MCF 10A (cell line): ENCODE measurements at regions of chr3 and their contacts with region 1.

Region 1: GRCh38 chr3:126134219-126134975 is 46.0 kb downstream of the ALDH1L1 start:
- DNase-seq: peak; percentile 63
- H3K4me3 Mint-ChIP-seq: no peak overlapping the region
- H3K27ac Mint-ChIP-seq: no peak overlapping the region
- H3K4me1 Mint-ChIP-seq: peaks cover 7% of the 10 kb centered on the region
- H3K27me3 Mint-ChIP-seq: peaks cover 20% of the 10 kb centered on the region
- CTCF ChIP-seq: peak; percentile 92

Region 2: DNA sequence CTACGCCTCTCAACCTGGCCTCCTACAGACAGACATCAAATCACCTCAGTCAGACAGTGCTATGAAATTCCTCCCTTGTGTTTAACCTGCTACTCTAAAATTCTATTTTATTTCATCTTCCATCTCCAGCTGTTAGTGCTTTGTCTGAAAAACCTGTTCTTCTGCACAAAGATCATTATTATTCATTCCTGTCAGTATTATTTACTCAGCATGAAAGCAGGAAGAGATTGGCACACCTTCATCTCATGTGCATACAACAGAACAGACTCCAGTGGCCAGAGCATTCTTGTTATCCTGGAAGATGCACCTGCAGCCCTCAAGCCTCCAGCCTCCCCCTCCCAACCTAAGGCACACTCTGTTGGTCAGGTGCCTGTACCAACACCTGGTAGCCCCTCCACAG is 167.3 kb before region 1 on chr3:
- CTCF ChIA-PET with region 1: interaction called, 14 read pairs
- POLR2A ChIA-PET with region 1: no interaction called
- intact Hi-C with region 1: no loop called
- DNase-seq: no peak
- H3K4me3 Mint-ChIP-seq: no peak overlapping the region
- H3K27ac Mint-ChIP-seq: no peak overlapping the region
- H3K4me1 Mint-ChIP-seq: no peaks in the 10 kb centered on the region
- H3K27me3 Mint-ChIP-seq: no peaks in the 10 kb centered on the region
- CTCF ChIP-seq: no peak

Region 3: DNA sequence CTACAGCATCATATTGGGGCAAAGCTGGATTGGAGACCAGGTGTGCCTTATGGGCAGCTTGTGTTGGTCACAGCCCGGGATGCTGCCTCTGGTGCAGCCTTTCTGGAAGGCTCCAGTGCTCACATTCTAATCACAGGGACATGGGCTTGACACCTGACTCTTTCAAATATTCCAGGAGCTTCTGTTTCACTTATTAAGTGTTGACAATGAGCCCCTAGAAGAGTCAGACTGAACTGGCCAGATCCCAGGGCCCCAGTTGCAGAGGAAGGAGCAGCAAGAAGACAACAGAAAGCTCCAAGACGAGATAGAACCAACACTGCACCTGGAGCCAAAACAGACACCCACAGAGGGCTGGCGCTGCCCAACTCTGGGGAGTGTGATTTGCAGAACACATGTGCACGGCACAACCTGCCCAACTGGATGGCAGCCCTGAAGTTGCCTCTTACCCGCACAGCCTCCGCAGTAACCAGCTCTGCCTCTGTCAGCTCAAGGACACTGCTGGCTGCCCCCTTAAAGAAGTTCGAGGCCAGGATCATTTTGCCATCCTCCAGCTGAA is 15.6 kb after region 1 on chr3:
- CTCF ChIA-PET with region 1: interaction called, 20 read pairs
- POLR2A ChIA-PET with region 1: no interaction called
- intact Hi-C with region 1: no loop called
- DNase-seq: no peak
- H3K4me3 Mint-ChIP-seq: no peak overlapping the region
- H3K27ac Mint-ChIP-seq: no peak overlapping the region
- H3K4me1 Mint-ChIP-seq: no peaks in the 10 kb centered on the region
- H3K27me3 Mint-ChIP-seq: peaks cover 5% of the 10 kb centered on the region
- CTCF ChIP-seq: no peak

Region 4: DNA sequence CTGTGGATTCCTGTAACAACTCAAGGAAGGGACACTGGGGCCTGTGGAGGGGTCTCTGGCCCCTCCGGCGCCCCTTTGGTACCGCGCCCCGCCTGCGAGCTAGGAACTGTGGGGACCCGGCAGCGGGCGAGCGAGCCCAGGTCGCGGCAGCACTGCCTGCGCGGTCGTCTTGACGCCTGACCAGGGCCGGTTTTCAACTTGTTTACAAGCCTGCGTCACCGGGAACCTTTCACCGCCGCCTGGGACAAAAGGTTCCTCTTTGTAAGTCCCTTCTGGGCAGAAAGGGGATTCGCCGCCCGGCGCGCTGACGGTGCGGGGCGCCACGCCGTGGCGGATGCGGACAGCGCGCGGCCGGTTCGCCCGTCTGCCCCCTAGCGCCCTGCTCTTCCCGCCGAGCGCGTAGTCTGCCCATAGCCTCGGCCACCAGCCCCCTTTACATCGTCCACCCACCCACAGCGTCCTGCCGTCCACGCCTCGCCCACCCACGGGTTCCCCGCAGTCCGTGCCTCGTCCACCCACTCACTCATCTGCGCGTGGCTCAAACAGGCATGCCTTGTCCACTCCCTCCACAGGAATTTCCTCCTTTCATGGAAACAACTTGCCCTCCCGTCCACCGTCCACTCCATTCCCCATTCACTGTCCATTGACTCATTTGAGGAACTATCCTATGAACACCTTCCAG is 254.9 kb after region 1 on chr3:
- CTCF ChIA-PET with region 1: interaction called, 88 read pairs
- POLR2A ChIA-PET with region 1: no interaction called
- intact Hi-C with region 1: loop called (anchors 1 kb)
- DNase-seq: peak; percentile 82
- H3K4me3 Mint-ChIP-seq: peak overlapping the region; percentile 64
- H3K27ac Mint-ChIP-seq: peak overlapping the region; percentile 71
- H3K4me1 Mint-ChIP-seq: peaks cover 7% of the 10 kb centered on the region
- H3K27me3 Mint-ChIP-seq: peaks cover 7% of the 10 kb centered on the region
- CTCF ChIP-seq: peak; percentile 98

Region 5: GRCh38 chr3:126475413-126476114 is 341.2 kb after region 1 on chr3 and contains the start of gene ZXDC:
- CTCF ChIA-PET with region 1: interaction called, 6 read pairs
- POLR2A ChIA-PET with region 1: no interaction called
- intact Hi-C with region 1: loop called (anchors 1 kb)
- DNase-seq: peak; percentile 92
- H3K4me3 Mint-ChIP-seq: peak within 1 kb of the TSS; percentile 82
- H3K27ac Mint-ChIP-seq: peak within 1 kb of the TSS; percentile 91
- H3K4me1 Mint-ChIP-seq: peaks cover 29% of the 10 kb centered on the region
- H3K27me3 Mint-ChIP-seq: no peaks in the 10 kb centered on the region
- CTCF ChIP-seq: peak; percentile 17
- total RNA-seq, gene ZXDC: 37.2 and 37.5 TPM in 2 replicates